Breast epithelium (tissue), 4 donors: ENCODE measurements at regions of chr7 and their contacts with region 1.

Region 1: DNA sequence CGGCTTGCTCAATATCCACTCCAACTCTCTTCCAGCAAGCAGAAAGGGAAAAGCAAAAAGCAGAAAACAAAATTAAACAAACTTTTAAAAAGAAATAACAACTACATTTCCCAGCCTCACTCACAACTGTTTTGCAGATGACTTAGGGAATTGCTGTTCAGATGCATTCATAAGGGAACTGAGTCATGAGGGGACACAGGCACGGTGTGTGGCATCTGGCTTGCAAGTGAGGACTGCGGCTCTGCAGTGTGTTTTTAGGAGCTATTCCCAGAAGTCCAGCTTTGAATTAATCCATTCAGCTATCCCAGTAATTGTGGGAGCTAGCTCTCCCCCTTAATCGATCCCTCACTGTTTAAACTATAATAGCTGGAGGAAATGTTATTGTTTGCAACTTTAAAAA is 30.3 kb downstream of the PTN start:
- DNase-seq: no peak
- H3K4me3 ChIP-seq: no peak overlapping the region
- H3K27ac ChIP-seq: peak overlapping the region in 1 of 2 donors; percentile 13
- H3K4me1 ChIP-seq: no peaks in the 10 kb centered on the region
- H3K27me3 ChIP-seq: no peaks in the 10 kb centered on the region
- CTCF ChIP-seq: no peak
- POLR2A ChIP-seq: no peak

Region 2: GRCh38 chr7:137328373-137329120 is 15.3 kb after region 1 on chr7:
- intact Hi-C with region 1: loop called (anchors 1 kb)
- DNase-seq: no peak
- H3K4me3 ChIP-seq: no peak overlapping the region
- H3K27ac ChIP-seq: peak overlapping the region; percentile 71 to 74
- H3K4me1 ChIP-seq: no peaks in the 10 kb centered on the region
- H3K27me3 ChIP-seq: no peaks in the 10 kb centered on the region
- CTCF ChIP-seq: no peak
- POLR2A ChIP-seq: no peak

Region 3: GRCh38 chr7:137343281-137343841 is 30.2 kb after region 1 on chr7 and contains the start of gene PTN:
- intact Hi-C with region 1: no loop called
- DNase-seq: peak in 1 of 2 donors; percentile 65
- H3K4me3 ChIP-seq: peak within 1 kb of the TSS in 2 of 3 donors; percentile 50 to 67
- H3K27ac ChIP-seq: peak within 1 kb of the TSS; percentile 68 to 89
- H3K4me1 ChIP-seq: peaks cover 0 to 4% of the 10 kb centered on the region in 2 donors
- H3K27me3 ChIP-seq: no peaks in the 10 kb centered on the region
- CTCF ChIP-seq: no peak
- POLR2A ChIP-seq: no peak
- total RNA-seq, gene PTN: 0.48 to 343 (median 51.1) TPM